Activated naive CD4-positive, alpha-beta T cell treated with anti-CD3 and anti-CD28 coated beads for 36 hours (primary cell): ENCODE measurements at regions of chr5 and their contacts with region 1.

Region 1: DNA sequence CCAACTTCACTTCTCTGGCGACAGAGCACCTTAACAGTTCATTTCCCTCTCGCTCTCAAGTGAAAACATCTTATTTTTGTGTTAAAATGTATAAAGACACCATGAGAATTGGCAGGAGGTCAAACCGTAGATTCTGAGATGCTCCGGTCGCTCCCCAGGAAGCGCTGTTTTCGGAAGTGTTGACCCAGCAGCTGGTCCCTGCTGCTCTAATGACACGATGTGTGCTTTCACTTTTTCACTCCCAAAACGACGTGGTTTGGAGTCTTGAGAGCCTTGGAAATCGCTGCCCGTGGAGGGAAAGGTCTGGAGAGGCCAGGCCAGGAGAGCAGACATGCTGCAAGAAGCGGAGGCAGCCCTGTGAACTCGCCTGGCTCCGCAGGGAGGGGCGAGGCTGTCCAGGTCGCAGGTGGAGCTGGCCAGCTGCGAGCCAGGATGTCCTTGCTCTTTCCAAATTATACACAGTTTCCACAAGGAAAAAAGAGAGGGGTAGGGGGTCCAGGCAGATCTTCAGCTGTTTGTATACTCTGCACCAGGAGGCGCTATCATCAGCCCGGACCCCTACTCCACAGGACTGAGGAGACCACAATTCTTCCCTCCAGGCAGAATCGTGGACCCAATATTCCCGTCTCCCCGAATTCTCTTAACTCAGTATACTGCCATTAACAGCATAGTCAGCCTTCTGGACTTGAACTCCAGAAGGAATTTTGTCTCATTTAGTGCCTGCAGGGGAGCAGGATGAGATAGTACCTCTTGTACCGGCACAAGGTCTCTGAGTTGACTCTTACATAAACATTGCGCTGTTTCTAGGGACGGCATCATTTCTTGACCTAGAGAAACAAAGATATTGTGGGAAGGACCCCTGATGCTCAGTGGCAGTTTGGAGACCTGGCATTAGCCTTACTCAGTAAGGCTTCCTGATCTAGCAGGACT is 248.6 kb upstream of the ANKRD55 start:
- DNase-seq: peak; percentile 14
- H3K4me3 Mint-ChIP-seq: peak overlapping the region; percentile 73
- H3K27ac Mint-ChIP-seq: no peak overlapping the region
- H3K4me1 Mint-ChIP-seq: peaks cover 30% of the 10 kb centered on the region
- H3K27me3 Mint-ChIP-seq: no peaks in the 10 kb centered on the region

Region 2: GRCh38 chr5:56303515-56303914 is 178.2 kb before region 1 on chr5:
- CTCF ChIA-PET with region 1: no interaction called
- intact Hi-C with region 1: no loop called
- DNase-seq: no peak
- H3K4me3 Mint-ChIP-seq: no peak overlapping the region
- H3K27ac Mint-ChIP-seq: no peak overlapping the region
- H3K4me1 Mint-ChIP-seq: no peaks in the 10 kb centered on the region
- H3K27me3 Mint-ChIP-seq: no peaks in the 10 kb centered on the region

Region 3: DNA sequence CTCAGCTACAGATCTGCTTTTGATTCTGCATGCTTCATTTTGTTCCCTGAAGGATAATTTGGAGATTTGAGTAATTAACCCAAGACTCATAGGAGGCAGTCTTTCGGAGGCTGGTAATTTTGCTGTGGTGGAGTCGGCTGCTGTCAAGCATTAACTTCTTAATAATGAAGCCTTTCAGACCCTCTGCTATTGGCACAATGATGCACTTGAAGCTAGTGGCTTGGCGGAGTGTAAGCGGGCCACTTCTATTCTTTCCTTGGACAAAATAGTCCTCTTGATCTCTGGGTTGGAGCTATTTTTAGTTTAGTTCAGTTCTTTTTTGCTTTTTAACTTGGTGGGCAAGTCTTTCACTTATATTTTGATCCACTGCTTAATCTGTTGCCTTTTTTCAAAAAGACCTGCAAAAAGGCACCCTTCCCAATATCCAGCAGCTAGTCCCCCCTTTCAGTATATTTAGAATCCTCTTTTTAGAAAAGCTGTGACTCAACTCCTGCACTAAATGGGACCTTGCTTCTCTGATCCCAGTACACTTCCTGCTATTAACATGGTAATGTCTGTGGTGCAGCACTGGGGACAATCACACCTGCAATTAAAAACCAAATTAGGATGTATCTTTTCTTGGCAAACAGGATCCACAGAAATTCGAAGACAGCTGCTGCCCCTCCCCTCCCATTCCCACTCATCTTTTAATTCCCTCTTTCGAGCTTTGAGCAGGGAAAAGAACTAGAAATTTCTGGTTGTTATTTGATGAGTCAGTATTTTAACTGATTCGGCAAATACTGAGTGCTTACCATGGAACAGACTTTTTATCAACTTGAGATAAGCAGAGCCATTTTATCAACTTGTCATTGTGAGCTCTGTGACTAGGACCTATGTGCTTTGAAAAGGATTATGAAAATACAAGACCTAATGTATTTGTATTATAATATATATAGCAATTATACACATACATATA is 79.2 kb before region 1 on chr5:
- CTCF ChIA-PET with region 1: no interaction called
- intact Hi-C with region 1: no loop called
- DNase-seq: no peak
- H3K4me3 Mint-ChIP-seq: no peak overlapping the region
- H3K27ac Mint-ChIP-seq: no peak overlapping the region
- H3K4me1 Mint-ChIP-seq: no peaks in the 10 kb centered on the region
- H3K27me3 Mint-ChIP-seq: no peaks in the 10 kb centered on the region

Region 4: GRCh38 chr5:56534032-56534829 is 52.5 kb after region 1 on chr5:
- CTCF ChIA-PET with region 1: no interaction called
- intact Hi-C with region 1: no loop called
- DNase-seq: peak; percentile 59
- H3K4me3 Mint-ChIP-seq: no peak overlapping the region
- H3K27ac Mint-ChIP-seq: no peak overlapping the region
- H3K4me1 Mint-ChIP-seq: peaks cover 14% of the 10 kb centered on the region
- H3K27me3 Mint-ChIP-seq: no peaks in the 10 kb centered on the region

Region 5: DNA sequence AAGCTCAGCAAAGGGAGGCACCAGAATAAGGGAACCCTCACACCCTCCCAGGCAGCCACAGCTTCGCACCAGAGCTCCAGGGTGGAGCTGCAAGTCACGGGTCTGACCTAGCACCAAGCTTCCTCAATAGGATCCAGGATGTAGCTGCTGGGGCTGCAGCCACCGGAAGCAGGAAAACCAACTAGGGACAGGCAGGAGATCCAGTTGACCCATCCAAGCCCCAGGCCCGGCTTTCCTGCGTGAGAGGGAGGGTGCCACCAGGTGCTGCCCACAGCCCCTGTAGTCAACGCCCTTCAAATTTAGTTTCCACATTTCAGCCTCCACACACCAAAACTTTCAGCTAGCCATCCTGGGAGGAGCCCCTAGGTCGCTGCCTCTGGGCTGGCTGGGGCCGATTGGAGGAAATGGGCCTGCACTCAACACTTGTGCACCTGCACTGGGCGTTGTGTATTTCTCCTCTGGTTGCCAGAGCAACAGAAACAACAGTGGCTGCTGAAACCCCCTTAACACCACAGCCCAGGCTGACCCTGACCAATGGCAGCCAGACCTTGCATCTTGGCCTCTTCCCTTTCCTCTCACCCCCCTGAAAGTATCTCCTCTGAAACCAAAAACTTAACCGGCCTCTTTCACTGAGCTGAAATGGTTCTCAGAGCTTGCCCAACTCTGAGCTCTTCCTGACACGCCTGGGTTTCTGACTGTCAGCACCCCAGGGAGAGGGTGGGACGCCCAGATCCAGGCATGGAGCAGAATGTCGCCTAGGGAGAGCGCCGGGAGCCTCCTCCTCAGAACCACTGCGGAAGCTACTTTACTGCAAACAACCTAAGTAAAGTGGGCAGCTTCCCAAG is 107.2 kb after region 1 on chr5:
- CTCF ChIA-PET with region 1: no interaction called
- intact Hi-C with region 1: loop called (anchors 5 kb)
- DNase-seq: peak; percentile 52
- H3K4me3 Mint-ChIP-seq: no peak overlapping the region
- H3K27ac Mint-ChIP-seq: no peak overlapping the region
- H3K4me1 Mint-ChIP-seq: peaks cover 38% of the 10 kb centered on the region
- H3K27me3 Mint-ChIP-seq: no peaks in the 10 kb centered on the region

Region 6: DNA sequence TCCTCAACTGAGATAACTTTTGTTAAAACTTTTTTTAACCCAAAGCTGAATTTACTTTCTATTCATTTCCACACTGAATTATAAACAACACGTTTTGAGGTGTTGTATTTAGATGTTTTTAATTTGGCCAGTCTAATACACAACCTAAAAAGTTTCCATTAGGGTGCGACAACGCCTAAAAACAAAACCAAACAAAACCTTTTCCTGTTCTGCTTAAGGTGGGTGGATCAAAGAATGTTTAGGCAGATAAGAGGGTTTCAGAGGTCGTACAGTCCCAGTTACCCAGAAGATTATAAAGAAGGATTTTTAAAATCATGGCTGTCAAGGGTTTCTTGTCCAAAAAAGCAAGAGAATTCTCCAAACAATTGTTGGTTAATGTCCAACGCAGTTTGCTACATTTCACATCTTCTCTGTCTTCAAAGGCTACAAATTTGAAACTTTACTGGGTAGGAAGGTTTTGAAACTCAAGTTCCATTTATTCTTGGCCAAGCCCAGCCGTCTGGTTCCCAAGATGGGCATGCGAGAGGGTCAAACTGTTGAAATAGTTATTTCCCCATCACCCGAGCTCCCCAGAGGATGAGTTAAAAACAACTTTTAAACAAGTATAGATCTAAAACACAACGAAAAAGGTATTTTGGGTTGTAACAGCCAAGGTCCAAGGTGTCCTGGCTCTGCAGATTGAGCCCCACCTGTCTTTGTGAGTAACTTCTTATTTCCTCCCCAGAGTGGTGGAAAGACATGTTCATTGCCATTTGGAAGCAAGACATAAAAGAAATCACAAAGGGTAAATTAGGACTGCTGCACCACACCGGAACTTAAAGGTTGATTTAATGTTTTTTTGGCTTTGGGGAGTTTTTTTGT is 210.9 kb after region 1 on chr5:
- CTCF ChIA-PET with region 1: no interaction called
- intact Hi-C with region 1: loop called (anchors 5 kb)
- DNase-seq: no peak
- H3K4me3 Mint-ChIP-seq: peak overlapping the region; percentile 30
- H3K27ac Mint-ChIP-seq: peak overlapping the region; percentile 14
- H3K4me1 Mint-ChIP-seq: peaks cover 76% of the 10 kb centered on the region
- H3K27me3 Mint-ChIP-seq: no peaks in the 10 kb centered on the region